ENCODE measurements at regions of chr21 and their contacts with region 1.

Region 1: DNA sequence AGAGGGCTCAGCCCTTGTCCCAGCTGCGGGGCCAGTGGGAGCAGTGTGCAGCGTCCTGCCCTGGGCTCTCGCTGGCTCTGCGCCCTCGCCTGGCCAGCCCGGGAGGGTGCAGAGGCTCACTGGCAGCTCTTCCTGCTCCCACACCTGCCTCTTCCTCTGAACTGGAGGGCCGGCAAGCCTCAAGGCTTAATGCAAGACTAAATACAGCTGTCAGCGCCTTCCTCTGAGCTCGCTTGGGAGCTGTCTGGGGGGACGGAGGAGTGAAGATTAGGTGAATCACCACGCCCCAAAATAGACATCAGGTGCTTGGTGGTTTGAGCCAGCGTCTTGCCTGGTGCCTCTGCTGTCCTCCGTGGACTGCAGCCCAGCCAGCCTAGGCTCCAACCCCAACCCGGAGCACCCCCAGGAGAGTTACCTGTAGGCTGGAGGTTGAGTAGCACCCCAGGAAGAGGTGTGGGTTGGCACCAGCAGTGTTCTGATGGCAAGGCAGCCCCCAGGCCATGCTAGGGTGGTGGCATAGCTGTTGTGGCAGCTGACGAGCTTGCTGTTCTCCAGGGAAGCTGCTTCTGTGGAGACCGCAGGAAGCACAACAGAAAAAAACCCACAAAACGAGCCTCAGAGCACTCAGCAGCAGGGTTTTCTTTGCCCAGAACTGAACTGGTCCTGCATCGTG is 36.9 kb downstream of the UMODL1 start:
- DNase-seq: peak; percentile 50
- H3K4me3 Mint-ChIP-seq: no peak overlapping the region
- H3K27ac Mint-ChIP-seq: no peak overlapping the region
- H3K4me1 Mint-ChIP-seq: peaks cover 7% of the 10 kb centered on the region
- H3K27me3 Mint-ChIP-seq: peaks cover 14% of the 10 kb centered on the region

Region 2: GRCh38 chr21:42062236-42063022 is 45.6 kb before region 1 on chr21:
- intact Hi-C with region 1: loop called (anchors 5 kb)
- DNase-seq: peak; percentile 70
- H3K4me3 Mint-ChIP-seq: peak overlapping the region; percentile 64
- H3K27ac Mint-ChIP-seq: peak overlapping the region; percentile 73
- H3K4me1 Mint-ChIP-seq: peaks cover 40% of the 10 kb centered on the region
- H3K27me3 Mint-ChIP-seq: peaks cover 8% of the 10 kb centered on the region